GM12878 (cell line): ENCODE measurements at regions of chr20 and their contacts with region 1.

Region 1: GRCh38 chr20:63223221-63224207 is 7.6 kb upstream of the YTHDF1 start:
- DNase-seq: no peak
- ATAC-seq: peak; percentile 82
- H3K4me3 ChIP-seq: no peak overlapping the region
- H3K27ac ChIP-seq: no peak overlapping the region
- H3K4me1 ChIP-seq: no peaks in the 10 kb centered on the region
- H3K27me3 ChIP-seq: peaks cover 0 to 7% of the 10 kb centered on the region in 2 experiments; a peak in 3 of 4 replicates
- CTCF ChIP-seq: peak; percentile 75 to 87 (median 77)
- EP300 ChIP-seq: no peak
- POLR2A ChIP-seq: no peak
- RAD21 ChIP-seq: peak; percentile 68

Region 2: GRCh38 chr20:63234739-63235398 is 11.4 kb after region 1 on chr20:
- CTCF ChIA-PET with region 1: interaction called, 25 read pairs
- POLR2A ChIA-PET with region 1: no interaction called
- RAD21 ChIA-PET with region 1: interaction called, 6 read pairs
- SMC1A ChIA-PET with region 1: interaction called, 3 read pairs
- in situ Hi-C with region 1: no loop called
- intact Hi-C with region 1: no loop called
- DNase-seq: no peak
- ATAC-seq: peak; percentile 76
- H3K4me3 ChIP-seq: no peak overlapping the region
- H3K27ac ChIP-seq: no peak overlapping the region
- H3K4me1 ChIP-seq: no peaks in the 10 kb centered on the region
- H3K27me3 ChIP-seq: peaks cover 2 to 3% of the 10 kb centered on the region in 2 experiments; a peak in 3 of 4 replicates
- CTCF ChIP-seq: peak; percentile 37 to 65 (median 58)
- EP300 ChIP-seq: no peak
- POLR2A ChIP-seq: no peak
- RAD21 ChIP-seq: no peak

Region 3: GRCh38 chr20:63272584-63273579 is 49.4 kb after region 1 on chr20 and contains the start of gene ARFGAP1:
- CTCF ChIA-PET with region 1: interaction called, 5 read pairs
- POLR2A ChIA-PET with region 1: no interaction called
- RAD21 ChIA-PET with region 1: no interaction called
- SMC1A ChIA-PET with region 1: no interaction called
- in situ Hi-C with region 1: no loop called
- intact Hi-C with region 1: loop called (anchors 5 kb)
- DNase-seq: peak; percentile 28
- ATAC-seq: peak; percentile 97
- H3K4me3 ChIP-seq: peak within 1 kb of the TSS; percentile 91
- H3K27ac ChIP-seq: peak within 1 kb of the TSS; percentile 76
- H3K4me1 ChIP-seq: peaks cover 3% of the 10 kb centered on the region
- H3K27me3 ChIP-seq: no peaks in the 10 kb centered on the region
- CTCF ChIP-seq: no peak
- EP300 ChIP-seq: no peak
- POLR2A ChIP-seq: peak; percentile 92
- RAD21 ChIP-seq: no peak
- polyA plus RNA-seq, gene ARFGAP1: 0.45 to 1.5 TPM

Region 4: DNA sequence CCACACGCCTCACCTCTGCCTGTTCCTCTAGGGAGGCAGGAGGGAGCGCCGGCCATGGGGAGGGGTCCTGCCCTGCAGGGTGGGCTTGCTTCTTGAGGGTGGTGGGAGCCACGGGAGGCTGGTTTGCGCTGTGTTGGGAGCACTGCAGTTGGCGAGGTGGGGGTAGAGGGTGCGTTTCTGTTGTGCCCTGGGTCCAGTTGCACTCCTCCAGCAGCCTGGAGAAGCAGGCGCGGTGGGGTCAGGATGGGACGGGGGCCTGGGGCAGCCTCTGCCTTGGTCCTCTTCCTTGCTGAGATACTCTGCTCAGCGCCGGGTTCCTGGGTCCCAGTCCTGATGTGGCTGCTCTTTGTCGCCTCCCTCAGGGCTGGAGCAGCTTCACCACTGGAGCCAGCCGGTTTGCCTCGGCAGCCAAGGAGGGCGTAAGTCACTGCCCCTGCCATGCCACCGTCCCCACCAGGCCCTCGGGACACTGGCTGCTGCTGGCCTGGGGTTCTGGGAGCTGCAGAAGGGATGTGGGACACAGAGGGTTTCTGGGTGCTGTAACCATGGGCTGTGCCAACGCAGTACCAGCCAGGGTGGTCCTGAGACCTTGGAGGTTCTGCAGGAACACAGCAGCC is 57.5 kb after region 1 on chr20:
- CTCF ChIA-PET with region 1: interaction called, 10 read pairs
- POLR2A ChIA-PET with region 1: no interaction called
- RAD21 ChIA-PET with region 1: no interaction called
- SMC1A ChIA-PET with region 1: no interaction called
- in situ Hi-C with region 1: no loop called
- intact Hi-C with region 1: no loop called
- DNase-seq: no peak
- ATAC-seq: 0 out of 3 replicates have a peak, but pooled peaks have one; percentile 30
- H3K4me3 ChIP-seq: no peak overlapping the region
- H3K27ac ChIP-seq: no peak overlapping the region
- H3K4me1 ChIP-seq: no peaks in the 10 kb centered on the region
- H3K27me3 ChIP-seq: no peaks in the 10 kb centered on the region
- CTCF ChIP-seq: peak in 1 of 3 experiments; percentile 13; a peak in 2 of 6 replicates
- EP300 ChIP-seq: no peak
- POLR2A ChIP-seq: peak; percentile 51; the same call in 1 of the 2 replicates
- RAD21 ChIP-seq: no peak

Region 5: GRCh38 chr20:63290677-63291472 is 67.4 kb after region 1 on chr20:
- CTCF ChIA-PET with region 1: interaction called, 19 read pairs
- POLR2A ChIA-PET with region 1: no interaction called
- RAD21 ChIA-PET with region 1: no interaction called
- SMC1A ChIA-PET with region 1: interaction called, 3 read pairs
- in situ Hi-C with region 1: no loop called
- intact Hi-C with region 1: no loop called
- DNase-seq: no peak
- ATAC-seq: peak; percentile 87
- H3K4me3 ChIP-seq: no peak overlapping the region
- H3K27ac ChIP-seq: no peak overlapping the region
- H3K4me1 ChIP-seq: no peaks in the 10 kb centered on the region
- H3K27me3 ChIP-seq: no peaks in the 10 kb centered on the region; a peak in 1 of 4 replicates
- CTCF ChIP-seq: peak; percentile 58 to 91 (median 61)
- EP300 ChIP-seq: no peak
- POLR2A ChIP-seq: peak; percentile 48
- RAD21 ChIP-seq: peak; percentile 22; the same call in 1 of the 2 replicates

Region 6: GRCh38 chr20:63381807-63382322 is 158.4 kb after region 1 on chr20:
- CTCF ChIA-PET with region 1: interaction called, 16 read pairs
- POLR2A ChIA-PET with region 1: no interaction called
- RAD21 ChIA-PET with region 1: interaction called, 3 read pairs
- SMC1A ChIA-PET with region 1: interaction called, 4 read pairs
- in situ Hi-C with region 1: no loop called
- intact Hi-C with region 1: no loop called
- DNase-seq: no peak
- ATAC-seq: peak; percentile 54
- H3K4me3 ChIP-seq: no peak overlapping the region
- H3K27ac ChIP-seq: no peak overlapping the region
- H3K4me1 ChIP-seq: no peaks in the 10 kb centered on the region
- H3K27me3 ChIP-seq: no peaks in the 10 kb centered on the region
- CTCF ChIP-seq: peak; percentile 73 to 85 (median 79)
- EP300 ChIP-seq: no peak
- POLR2A ChIP-seq: no peak
- RAD21 ChIP-seq: peak; percentile 72

Region 7: DNA sequence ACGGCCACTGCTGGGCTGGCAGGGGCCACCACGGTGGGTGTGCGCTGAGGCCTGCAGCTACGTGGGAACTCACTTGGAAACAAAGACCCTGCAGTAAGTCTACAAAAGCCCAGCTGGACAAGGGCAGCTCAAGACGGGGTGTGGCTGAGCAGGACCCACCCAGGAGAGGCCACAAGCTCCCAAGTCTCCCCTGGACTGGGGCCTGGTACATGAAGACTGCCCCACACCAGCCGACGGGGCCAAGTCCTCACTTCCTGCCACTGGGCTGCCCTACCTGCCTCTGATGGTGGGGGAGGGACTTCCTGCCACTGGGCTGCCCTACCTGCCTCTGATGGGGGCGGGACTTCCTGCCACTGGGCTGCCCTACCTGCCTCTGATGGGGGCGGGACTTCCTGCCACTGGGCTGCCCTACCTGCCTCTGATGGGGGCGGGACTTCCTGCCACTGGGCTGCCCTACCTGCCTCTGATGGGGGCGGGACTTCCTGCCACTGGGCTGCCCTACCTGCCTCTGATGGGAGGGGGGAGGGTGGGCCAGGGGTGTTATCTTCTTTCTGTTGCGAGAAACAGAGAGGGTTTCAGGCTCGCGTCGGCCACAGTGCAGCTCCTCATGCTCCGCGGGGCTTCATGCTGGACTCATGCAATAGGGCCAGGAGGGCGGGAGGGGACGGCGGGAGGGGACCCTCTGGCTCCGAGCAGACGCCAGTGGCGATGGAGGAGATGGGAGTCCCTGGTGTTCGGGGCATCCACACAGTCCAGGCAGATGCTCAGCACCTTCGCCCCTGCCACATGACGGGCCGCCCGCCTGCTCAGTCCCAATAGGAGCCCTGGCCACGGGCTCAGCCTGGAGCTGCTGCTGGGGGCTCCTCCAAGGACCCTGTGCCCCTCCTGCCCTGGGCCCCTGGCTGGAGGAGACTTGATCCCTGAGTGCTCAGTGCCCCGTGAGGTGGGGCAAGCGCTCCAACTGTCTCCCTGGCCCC is 186.2 kb after region 1 on chr20:
- CTCF ChIA-PET with region 1: no interaction called
- POLR2A ChIA-PET with region 1: no interaction called
- RAD21 ChIA-PET with region 1: no interaction called
- SMC1A ChIA-PET with region 1: no interaction called
- in situ Hi-C with region 1: no loop called
- intact Hi-C with region 1: no loop called
- DNase-seq: no peak
- ATAC-seq: no peak
- H3K4me3 ChIP-seq: no peak overlapping the region
- H3K27ac ChIP-seq: no peak overlapping the region
- H3K4me1 ChIP-seq: no peaks in the 10 kb centered on the region
- H3K27me3 ChIP-seq: no peaks in the 10 kb centered on the region
- CTCF ChIP-seq: no peak
- EP300 ChIP-seq: no peak
- POLR2A ChIP-seq: no peak
- RAD21 ChIP-seq: no peak